ENCODE measurements at regions of chr1 and their contacts with region 1.

Region 1: DNA sequence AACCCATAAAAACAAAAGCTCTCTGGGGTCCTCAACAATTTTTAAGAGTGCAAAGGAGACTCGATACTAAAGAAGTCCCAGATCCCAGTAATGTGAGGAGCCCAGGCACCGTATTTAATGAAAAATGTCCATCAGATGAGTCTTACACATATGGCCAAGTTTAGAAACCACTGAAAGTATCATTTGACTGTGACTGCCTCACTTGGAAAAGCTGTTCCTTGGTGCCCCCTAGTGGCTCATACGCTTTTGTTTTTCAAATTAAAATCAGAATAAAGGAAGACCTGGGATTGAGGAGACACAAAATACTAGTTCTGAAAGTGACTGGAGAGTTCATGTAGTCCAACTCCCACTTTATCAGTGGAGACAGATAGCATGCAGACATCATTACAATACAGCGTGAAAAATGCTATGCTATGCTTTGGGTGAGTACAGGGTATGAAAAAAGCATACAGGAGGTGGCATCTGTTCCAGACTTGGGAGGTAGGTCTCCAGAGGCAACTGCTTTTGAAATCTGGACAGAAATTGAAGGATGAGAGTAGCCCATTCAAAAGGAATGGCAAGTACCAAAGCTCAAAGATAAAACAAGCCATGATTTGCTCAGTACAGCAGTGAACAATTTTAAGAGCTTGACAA is 33.8 kb downstream of the GDAP2 start:
- H3K4me3 ChIP-seq: no peak overlapping the region
- H3K27ac ChIP-seq: no peak overlapping the region
- H3K4me1 ChIP-seq: no peaks in the 10 kb centered on the region
- CTCF ChIP-seq: peak; percentile 62

Region 2: GRCh38 chr1:117512743-117513321 is 382.8 kb before region 1 on chr1:
- CTCF ChIA-PET with region 1: interaction called, 39 read pairs
- POLR2A ChIA-PET with region 1: no interaction called
- H3K4me3 ChIP-seq: no peak overlapping the region
- H3K27ac ChIP-seq: no peak overlapping the region
- H3K4me1 ChIP-seq: no peaks in the 10 kb centered on the region
- CTCF ChIP-seq: peak; percentile 37; the same call in 1 of the 2 replicates

Region 3: DNA sequence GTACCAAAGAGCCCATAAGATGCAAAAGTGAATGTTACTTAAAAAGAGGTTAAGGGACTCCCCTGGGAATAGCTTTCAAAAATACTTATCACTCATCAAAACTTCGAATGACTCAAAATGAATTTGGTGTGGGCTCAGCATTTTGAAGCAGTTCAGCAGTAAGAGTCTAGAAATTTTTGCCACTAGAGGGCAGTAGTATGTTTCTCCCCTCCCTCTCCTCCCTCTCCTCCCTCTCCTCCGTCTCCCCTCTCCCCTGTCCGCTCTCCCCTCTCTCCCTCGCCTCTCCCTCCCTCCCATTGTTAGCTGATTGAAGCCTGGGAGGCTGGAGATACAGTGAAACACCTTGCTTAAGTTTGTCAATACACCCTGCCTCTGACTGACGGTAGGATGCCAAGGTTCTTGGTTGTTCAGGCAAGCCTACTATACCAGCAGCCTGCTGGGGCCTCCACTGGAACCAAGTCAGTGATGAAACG is 360.6 kb before region 1 on chr1:
- CTCF ChIA-PET with region 1: interaction called, 20 read pairs
- POLR2A ChIA-PET with region 1: no interaction called
- H3K4me3 ChIP-seq: no peak overlapping the region
- H3K27ac ChIP-seq: no peak overlapping the region
- H3K4me1 ChIP-seq: no peaks in the 10 kb centered on the region
- CTCF ChIP-seq: peak; percentile 66

Region 4: GRCh38 chr1:117710710-117711109 is 184.9 kb before region 1 on chr1:
- CTCF ChIA-PET with region 1: interaction called, 13 read pairs
- POLR2A ChIA-PET with region 1: no interaction called
- H3K4me3 ChIP-seq: no peak overlapping the region
- H3K27ac ChIP-seq: no peak overlapping the region
- H3K4me1 ChIP-seq: no peaks in the 10 kb centered on the region
- CTCF ChIP-seq: no peak

Region 5: DNA sequence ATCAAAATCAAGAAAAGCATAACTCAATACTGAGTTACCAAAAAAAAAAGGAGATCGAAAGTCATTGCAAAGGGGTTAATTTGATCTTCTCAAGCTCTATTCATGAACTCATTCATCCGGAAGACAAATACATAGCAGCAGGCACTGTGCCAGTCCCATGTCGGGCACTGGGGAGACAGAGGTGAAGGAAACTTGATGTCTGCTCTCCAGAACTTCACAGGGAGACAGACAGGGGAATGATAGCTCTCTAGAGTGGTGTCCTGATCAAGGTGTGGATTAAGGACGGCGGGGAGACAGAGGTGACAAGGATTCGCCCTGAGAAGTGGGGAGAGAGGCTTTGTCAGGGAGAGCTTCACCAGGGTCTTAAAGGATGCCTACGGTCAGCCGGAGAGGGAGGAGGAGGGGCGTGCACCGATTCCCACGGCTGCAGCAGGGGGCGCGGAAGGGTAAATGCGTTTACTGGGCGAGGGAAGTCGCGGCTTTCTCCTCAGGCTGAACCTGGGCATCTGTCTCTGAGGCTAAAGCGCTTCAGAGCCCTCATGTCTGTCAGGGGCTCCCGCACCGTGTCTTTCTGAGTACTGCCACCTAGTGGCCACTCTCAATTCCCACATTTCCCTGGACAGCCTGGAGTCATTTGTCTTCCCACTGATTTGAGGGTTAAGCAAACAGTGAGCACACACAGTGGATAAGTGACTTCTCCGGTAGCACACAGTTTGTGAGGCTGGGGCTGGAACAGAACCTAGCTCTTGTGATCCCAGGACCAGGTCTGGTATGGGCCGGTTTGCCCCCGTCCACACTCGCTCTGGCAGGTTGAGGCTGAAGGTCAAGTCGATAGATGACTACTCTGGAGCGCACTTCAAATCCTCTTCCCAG is 136.9 kb before region 1 on chr1:
- CTCF ChIA-PET with region 1: interaction called, 42 read pairs
- POLR2A ChIA-PET with region 1: no interaction called
- H3K4me3 ChIP-seq: peak overlapping the region; percentile 47
- H3K27ac ChIP-seq: peak overlapping the region; percentile 21; the same call in 1 of the 2 replicates
- H3K4me1 ChIP-seq: peaks cover 4% of the 10 kb centered on the region
- CTCF ChIP-seq: peak; percentile 95

Region 6: GRCh38 chr1:117877823-117878222 is 17.8 kb before region 1 on chr1:
- CTCF ChIA-PET with region 1: interaction called, 13 read pairs
- POLR2A ChIA-PET with region 1: no interaction called
- H3K4me3 ChIP-seq: no peak overlapping the region
- H3K27ac ChIP-seq: no peak overlapping the region
- H3K4me1 ChIP-seq: no peaks in the 10 kb centered on the region
- CTCF ChIP-seq: no peak

Region 7: DNA sequence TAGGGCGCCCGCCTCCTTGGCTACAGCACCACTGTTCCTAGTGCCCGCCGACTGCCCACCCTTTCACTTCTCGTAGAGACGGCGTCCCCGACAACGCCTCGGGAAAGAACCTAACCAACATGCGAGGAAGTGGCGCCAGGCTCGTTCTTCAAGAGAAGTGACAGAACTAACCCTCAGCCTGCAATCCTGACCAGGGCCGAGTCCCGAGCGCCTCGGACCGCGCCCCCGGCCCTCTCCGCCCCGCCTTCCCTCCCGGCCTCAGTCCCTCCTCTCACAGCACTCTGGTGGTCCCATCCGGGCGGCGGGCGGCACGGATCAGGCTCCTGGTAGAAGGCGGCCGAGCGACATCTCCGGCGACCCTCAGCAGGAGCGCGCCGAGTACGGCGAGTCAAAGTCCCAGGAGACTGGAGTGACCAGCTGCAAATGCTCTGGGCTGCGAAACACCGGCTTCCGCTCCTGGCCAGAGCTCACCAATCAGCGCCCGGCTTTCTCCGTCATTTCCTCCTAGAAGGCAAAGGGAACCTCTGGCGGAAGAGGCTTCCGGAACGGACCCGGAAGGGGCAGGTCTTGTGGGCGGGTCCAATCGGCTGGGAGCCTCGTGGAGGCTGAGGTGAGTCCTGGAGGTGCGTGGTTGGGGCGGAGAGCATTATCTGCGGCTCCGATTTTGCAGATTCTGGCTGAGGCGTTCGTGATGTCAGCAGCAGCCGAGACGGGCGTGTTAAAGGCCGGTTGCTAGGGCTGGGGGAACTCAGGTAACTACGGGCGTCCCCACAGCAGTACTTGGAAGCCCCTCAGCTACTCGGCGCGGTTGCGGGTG is 33.8 kb after region 1 on chr1 and contains the starts of genes GDAP2 and WDR3:
- CTCF ChIA-PET with region 1: interaction called, 15 read pairs
- POLR2A ChIA-PET with region 1: no interaction called
- H3K4me3 ChIP-seq: peak within 1 kb of the TSS; percentile 92
- H3K27ac ChIP-seq: peak within 1 kb of the TSS; percentile 63; the same call in 1 of the 2 replicates
- H3K4me1 ChIP-seq: peaks cover 7% of the 10 kb centered on the region; the same call in 1 of the 2 replicates
- CTCF ChIP-seq: peak; percentile 54; the same call in 1 of the 2 replicates

Region 8: DNA sequence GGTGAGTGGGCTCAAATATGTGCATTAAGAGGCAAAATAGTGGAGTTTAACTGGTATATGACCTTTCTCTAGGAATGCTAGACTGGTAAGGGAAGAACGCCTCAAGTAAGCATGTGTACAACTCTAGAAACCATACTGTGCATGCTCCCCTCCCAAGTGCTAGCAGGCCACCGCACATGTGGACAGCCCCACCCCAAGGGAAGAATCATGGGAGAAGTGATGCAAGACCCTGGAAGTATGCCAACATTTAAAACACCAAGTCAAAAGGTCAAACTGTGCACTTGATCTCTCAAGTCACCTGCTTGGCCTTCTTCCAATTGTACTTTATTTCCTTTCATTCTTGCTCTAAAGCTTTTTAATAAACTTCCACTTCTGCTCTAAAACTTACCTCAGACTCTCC is 154.4 kb after region 1 on chr1:
- CTCF ChIA-PET with region 1: no interaction called
- POLR2A ChIA-PET with region 1: no interaction called
- H3K4me3 ChIP-seq: no peak overlapping the region
- H3K27ac ChIP-seq: no peak overlapping the region
- H3K4me1 ChIP-seq: no peaks in the 10 kb centered on the region
- CTCF ChIP-seq: no peak